B cell (primary cell): ENCODE measurements at regions of chr15 and their contacts with region 1.

Region 1: GRCh38 chr15:77419836-77420609 is at the start of gene PEAK1:
- DNase-seq: peak; percentile 100
- ATAC-seq: peak; percentile 95
- H3K4me3 ChIP-seq: peak within 1 kb of the TSS; percentile 64 to 97 (median 95)
- H3K4me3 Mint-ChIP-seq: peak within 1 kb of the TSS; percentile 99
- H3K27ac ChIP-seq: peak within 1 kb of the TSS; percentile 77 to 95
- H3K27ac Mint-ChIP-seq: peak within 1 kb of the TSS; percentile 98
- H3K4me1 ChIP-seq: peaks cover 16 to 17% of the 10 kb centered on the region in 2 donors
- H3K4me1 Mint-ChIP-seq: peaks cover 54% of the 10 kb centered on the region
- H3K27me3 ChIP-seq: no peaks in the 10 kb centered on the region
- H3K27me3 Mint-ChIP-seq: no peaks in the 10 kb centered on the region
- CTCF ChIP-seq: no peak
- total RNA-seq, gene PEAK1: 38.0 and 53.2 TPM in 2 replicates

Region 2: DNA sequence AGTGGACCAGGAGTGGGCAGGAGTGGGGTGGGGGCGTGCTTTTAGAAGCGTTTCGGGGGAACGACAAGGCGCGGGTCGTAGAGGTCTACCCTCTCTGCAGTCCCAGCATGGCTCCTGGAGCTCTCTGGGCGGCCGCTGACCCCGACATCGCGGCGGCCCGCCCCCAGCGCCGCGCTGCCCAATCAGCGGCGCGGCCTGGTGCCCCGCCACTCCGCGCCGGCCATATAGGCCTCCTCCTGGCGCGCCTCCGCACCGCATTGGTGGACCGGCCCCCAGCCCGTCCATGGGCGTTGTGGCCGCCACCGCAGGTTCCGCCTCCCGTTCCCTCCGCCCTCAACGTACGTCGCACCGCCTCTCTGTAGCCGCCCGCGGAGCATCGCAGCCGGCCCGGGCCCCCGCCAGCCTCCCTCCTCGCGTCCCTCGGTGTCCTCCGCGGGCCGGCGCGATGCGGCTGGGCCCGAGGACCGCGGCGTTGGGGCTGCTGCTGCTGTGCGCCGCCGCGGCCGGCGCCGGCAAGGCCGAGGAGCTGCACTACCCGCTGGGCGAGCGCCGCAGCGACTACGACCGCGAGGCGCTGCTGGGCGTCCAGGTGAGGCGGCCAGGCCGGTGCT is 488.5 kb before region 1 on chr15 and contains the start of gene RCN2:
- CTCF ChIA-PET with region 1: no interaction called
- POLR2A ChIA-PET with region 1: no interaction called
- intact Hi-C with region 1: loop called (anchors 1 kb)
- DNase-seq: peak; percentile 95
- ATAC-seq: peak; percentile 97
- H3K4me3 ChIP-seq: peak within 1 kb of the TSS; percentile 54 to 84 (median 61)
- H3K4me3 Mint-ChIP-seq: peak within 1 kb of the TSS; percentile 90
- H3K27ac ChIP-seq: peak within 1 kb of the TSS; percentile 71 to 80
- H3K27ac Mint-ChIP-seq: peak within 1 kb of the TSS; percentile 96
- H3K4me1 ChIP-seq: peaks cover 26 to 40% of the 10 kb centered on the region in 2 donors
- H3K4me1 Mint-ChIP-seq: peaks cover 35% of the 10 kb centered on the region
- H3K27me3 ChIP-seq: no peaks in the 10 kb centered on the region
- H3K27me3 Mint-ChIP-seq: no peaks in the 10 kb centered on the region
- CTCF ChIP-seq: no peak
- total RNA-seq, gene RCN2: 27.8 and 29.5 TPM in 2 replicates

Region 3: GRCh38 chr15:77118882-77119321 is 301.1 kb before region 1 on chr15:
- CTCF ChIA-PET with region 1: interaction called, 10 read pairs
- POLR2A ChIA-PET with region 1: no interaction called
- intact Hi-C with region 1: no loop called
- DNase-seq: peak; percentile 76
- ATAC-seq: peak; percentile 54
- H3K4me3 ChIP-seq: no peak overlapping the region
- H3K4me3 Mint-ChIP-seq: no peak overlapping the region
- H3K27ac ChIP-seq: no peak overlapping the region
- H3K27ac Mint-ChIP-seq: no peak overlapping the region
- H3K4me1 ChIP-seq: peaks cover 24 to 31% of the 10 kb centered on the region in 2 donors
- H3K4me1 Mint-ChIP-seq: peaks cover 47% of the 10 kb centered on the region
- H3K27me3 ChIP-seq: no peaks in the 10 kb centered on the region
- H3K27me3 Mint-ChIP-seq: no peaks in the 10 kb centered on the region
- CTCF ChIP-seq: peak; percentile 77

Region 4: GRCh38 chr15:77393471-77393840 is 26.6 kb before region 1 on chr15:
- CTCF ChIA-PET with region 1: no interaction called
- POLR2A ChIA-PET with region 1: no interaction called
- intact Hi-C with region 1: no loop called
- DNase-seq: no peak
- ATAC-seq: no peak
- H3K4me3 ChIP-seq: no peak overlapping the region
- H3K4me3 Mint-ChIP-seq: no peak overlapping the region
- H3K27ac ChIP-seq: no peak overlapping the region
- H3K27ac Mint-ChIP-seq: no peak overlapping the region
- H3K4me1 ChIP-seq: peaks cover 0 to 4% of the 10 kb centered on the region in 2 donors
- H3K4me1 Mint-ChIP-seq: peaks cover 21% of the 10 kb centered on the region
- H3K27me3 ChIP-seq: no peaks in the 10 kb centered on the region
- H3K27me3 Mint-ChIP-seq: no peaks in the 10 kb centered on the region
- CTCF ChIP-seq: no peak

Region 5: GRCh38 chr15:77409259-77410156 is 10.5 kb before region 1 on chr15:
- CTCF ChIA-PET with region 1: interaction called, 5 read pairs
- POLR2A ChIA-PET with region 1: interaction called, 9 read pairs
- intact Hi-C with region 1: loop called (anchors 1 kb)
- DNase-seq: peak; percentile 72
- ATAC-seq: peak; percentile 73
- H3K4me3 ChIP-seq: peak overlapping the region in 1 of 5 experiments; percentile 48
- H3K4me3 Mint-ChIP-seq: peak overlapping the region; percentile 75
- H3K27ac ChIP-seq: peak overlapping the region; percentile 50 to 71
- H3K27ac Mint-ChIP-seq: peak overlapping the region; percentile 79
- H3K4me1 ChIP-seq: peaks cover 30 to 31% of the 10 kb centered on the region in 2 donors
- H3K4me1 Mint-ChIP-seq: peaks cover 56% of the 10 kb centered on the region
- H3K27me3 ChIP-seq: no peaks in the 10 kb centered on the region
- H3K27me3 Mint-ChIP-seq: no peaks in the 10 kb centered on the region
- CTCF ChIP-seq: no peak

Region 6: GRCh38 chr15:77557144-77557543 is 137.1 kb after region 1 on chr15:
- CTCF ChIA-PET with region 1: no interaction called
- POLR2A ChIA-PET with region 1: no interaction called
- intact Hi-C with region 1: no loop called
- DNase-seq: no peak
- ATAC-seq: no peak
- H3K4me3 ChIP-seq: no peak overlapping the region
- H3K4me3 Mint-ChIP-seq: no peak overlapping the region
- H3K27ac ChIP-seq: no peak overlapping the region
- H3K27ac Mint-ChIP-seq: no peak overlapping the region
- H3K4me1 ChIP-seq: no peaks in the 10 kb centered on the region
- H3K4me1 Mint-ChIP-seq: no peaks in the 10 kb centered on the region
- H3K27me3 ChIP-seq: peaks cover 0 to 4% (median 0%) of the 10 kb centered on the region in 4 experiments
- H3K27me3 Mint-ChIP-seq: peaks cover 7% of the 10 kb centered on the region
- CTCF ChIP-seq: no peak